Head of caudate nucleus (tissue), 42 donors: ENCODE measurements at regions of chr14 and their contacts with region 1.

Region 1: DNA sequence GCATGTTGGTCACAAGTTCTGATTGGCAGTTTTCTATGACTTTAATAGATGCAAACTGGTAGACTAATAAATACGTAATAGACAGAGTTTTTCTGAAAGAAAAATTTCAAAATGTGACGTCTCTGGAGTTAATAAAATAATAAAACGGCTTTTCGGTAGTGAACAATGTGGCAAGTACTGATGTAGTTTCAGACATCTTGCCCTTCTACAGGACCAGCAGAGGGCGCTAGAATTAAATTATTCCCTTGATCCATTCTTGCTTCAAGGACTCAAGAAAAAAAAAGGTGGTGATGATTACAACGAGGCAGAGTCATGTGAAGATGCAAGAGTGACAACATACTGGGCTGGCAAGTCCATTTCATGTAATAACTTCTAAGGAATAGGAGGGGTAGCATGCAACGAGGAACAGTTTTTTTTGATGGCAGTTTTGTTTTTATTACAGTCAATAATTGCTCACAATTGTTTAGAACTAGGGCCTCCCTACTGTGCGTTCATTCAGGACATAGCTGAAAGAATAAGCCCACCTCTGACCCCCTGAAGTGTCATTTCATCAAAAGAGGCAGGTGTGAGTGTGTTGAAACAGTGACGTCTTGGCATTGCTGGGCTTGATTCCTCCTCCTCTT is 101.0 kb upstream of the GZMB start:
- DNase-seq: peak in 36 of 42 donors; percentile 4 to 88 (median 58)

Region 2: DNA sequence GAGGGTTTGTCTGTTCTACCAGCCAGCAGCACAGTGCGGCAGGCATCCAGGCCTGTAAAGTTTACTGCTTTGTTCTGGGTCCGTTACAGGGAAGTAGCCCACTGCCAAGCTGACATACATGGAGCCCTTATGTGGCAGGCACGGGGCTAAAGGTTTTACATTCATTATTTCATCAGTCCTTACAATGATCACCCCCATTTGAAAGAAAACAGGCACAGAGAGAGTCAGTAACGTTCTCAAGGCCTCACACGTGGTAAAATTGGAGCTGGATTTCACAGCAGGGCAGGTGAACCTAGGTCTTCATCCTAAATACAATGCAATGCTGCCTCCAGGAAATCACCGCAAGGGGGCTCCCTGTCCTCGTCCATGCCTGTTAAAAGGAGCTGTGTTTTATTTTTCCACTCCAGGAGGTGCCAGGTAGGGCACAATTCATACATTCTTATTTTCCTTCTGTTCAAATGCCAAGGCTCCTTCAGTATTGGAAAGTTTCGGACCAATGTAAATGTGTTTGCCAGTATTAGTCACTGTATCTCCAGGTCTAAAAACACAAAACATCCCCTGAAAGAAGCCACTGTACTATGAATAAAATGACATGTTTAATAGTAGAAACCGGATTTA is 71.2 kb after region 1 on chr14:
- intact Hi-C with region 1: loop called (anchors 10 kb)
- DNase-seq: peak; percentile 55 to 91 (median 78)

Region 3: GRCh38 chr14:25049568-25050268 is 314.7 kb after region 1 on chr14 and contains the start of gene STXBP6:
- intact Hi-C with region 1: loop called (anchors 10 kb)
- DNase-seq: peak; percentile 62 to 95 (median 90)

Region 4: DNA sequence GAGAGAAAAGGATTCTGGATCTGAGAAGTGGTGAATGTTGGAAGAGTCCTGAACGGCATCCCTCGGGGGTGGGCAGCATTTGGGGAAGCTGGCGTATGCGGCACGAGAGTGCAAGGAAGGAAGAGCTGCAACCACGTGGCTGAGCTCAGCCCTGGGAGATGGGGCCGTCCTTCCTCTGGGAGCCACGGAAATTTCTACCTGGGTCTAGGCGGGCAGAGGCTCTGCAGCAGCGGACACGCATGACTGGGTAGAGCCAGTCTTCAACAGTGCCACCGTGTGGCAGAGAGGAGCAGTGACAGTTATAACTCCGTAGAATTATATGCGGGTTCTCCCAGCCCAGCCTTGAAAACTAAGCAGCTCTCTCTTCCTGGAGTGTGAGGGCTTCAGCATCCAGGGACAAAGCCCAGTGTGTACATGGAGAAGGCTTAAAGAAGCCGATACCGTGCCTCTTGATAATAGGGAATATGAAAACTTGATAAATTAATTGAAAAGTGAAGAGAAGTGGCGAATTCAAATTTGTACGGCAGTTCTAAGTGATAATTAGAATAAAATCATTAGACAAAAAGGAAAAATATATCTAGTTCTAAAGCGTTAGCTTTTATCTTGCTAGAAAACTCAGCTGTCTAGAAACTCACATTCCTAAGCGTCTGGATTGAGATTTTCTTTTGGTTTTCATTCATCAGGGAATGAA is 397.9 kb after region 1 on chr14:
- intact Hi-C with region 1: loop called (anchors 10 kb)
- DNase-seq: peak; percentile 49 to 91 (median 78)